WTC11 (cell line): ENCODE measurements at regions of chr22 and their contacts with region 1.

Region 1: GRCh38 chr22:30253205-30253852 is 6.8 kb upstream of the LIF start:
- DNase-seq: no peak
- ATAC-seq: no peak
- H3K4me3 Mint-ChIP-seq: no peak overlapping the region
- H3K27ac Mint-ChIP-seq: peak overlapping the region; percentile 65
- H3K4me1 Mint-ChIP-seq: peaks cover 35% of the 10 kb centered on the region
- H3K27me3 Mint-ChIP-seq: peaks cover 3% of the 10 kb centered on the region; the same call in 1 of the 2 replicates
- CTCF ChIP-seq: no peak

Region 2: DNA sequence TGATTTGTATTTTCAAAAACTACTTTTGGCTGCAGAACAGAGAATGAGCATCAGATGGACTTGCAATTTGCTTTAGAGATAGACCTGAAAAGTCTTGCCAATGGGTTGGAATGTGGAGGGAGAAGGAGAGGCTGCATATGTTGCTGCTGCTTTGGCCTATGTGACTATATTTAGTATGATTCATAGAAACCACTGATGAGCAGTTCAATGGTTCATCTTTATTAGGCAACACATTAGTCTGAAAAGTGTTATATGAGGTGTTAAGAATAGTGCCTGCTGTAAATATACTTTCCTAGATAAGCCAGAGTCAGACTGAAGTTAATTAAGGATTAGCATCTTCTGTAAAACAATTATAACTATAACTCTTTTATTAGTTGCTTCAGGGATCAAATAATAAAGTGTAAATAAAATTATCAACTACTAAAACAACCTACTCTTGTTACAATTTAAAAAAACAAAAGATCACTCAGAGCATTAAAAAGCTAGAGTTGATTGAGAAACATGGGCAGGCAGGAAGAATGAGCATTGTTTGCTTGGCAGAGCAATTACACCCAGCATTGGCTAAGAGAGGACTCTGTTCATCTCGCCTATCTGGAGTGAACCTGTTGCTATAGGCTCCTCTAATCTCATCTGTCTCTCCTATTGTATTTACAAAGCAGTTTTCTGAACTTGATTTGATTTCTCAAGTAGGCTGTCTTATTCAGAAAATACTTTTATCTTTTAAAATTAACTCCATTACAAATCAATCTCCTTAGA is 136.8 kb before region 1 on chr22:
- CTCF ChIA-PET with region 1: interaction called, 23 read pairs
- POLR2A ChIA-PET with region 1: no interaction called
- DNase-seq: no peak
- ATAC-seq: no peak
- H3K4me3 Mint-ChIP-seq: no peak overlapping the region
- H3K27ac Mint-ChIP-seq: no peak overlapping the region
- H3K4me1 Mint-ChIP-seq: no peaks in the 10 kb centered on the region
- H3K27me3 Mint-ChIP-seq: no peaks in the 10 kb centered on the region; the same call in 1 of the 2 replicates
- CTCF ChIP-seq: no peak

Region 3: GRCh38 chr22:30235687-30236170 is 17.6 kb before region 1 on chr22:
- CTCF ChIA-PET with region 1: interaction called, 22 read pairs
- POLR2A ChIA-PET with region 1: no interaction called
- DNase-seq: no peak
- ATAC-seq: peak; percentile 23
- H3K4me3 Mint-ChIP-seq: no peak overlapping the region
- H3K27ac Mint-ChIP-seq: no peak overlapping the region
- H3K4me1 Mint-ChIP-seq: peaks cover 53% of the 10 kb centered on the region
- H3K27me3 Mint-ChIP-seq: no peaks in the 10 kb centered on the region; the same call in 1 of the 2 replicates
- CTCF ChIP-seq: no peak

Region 4: DNA sequence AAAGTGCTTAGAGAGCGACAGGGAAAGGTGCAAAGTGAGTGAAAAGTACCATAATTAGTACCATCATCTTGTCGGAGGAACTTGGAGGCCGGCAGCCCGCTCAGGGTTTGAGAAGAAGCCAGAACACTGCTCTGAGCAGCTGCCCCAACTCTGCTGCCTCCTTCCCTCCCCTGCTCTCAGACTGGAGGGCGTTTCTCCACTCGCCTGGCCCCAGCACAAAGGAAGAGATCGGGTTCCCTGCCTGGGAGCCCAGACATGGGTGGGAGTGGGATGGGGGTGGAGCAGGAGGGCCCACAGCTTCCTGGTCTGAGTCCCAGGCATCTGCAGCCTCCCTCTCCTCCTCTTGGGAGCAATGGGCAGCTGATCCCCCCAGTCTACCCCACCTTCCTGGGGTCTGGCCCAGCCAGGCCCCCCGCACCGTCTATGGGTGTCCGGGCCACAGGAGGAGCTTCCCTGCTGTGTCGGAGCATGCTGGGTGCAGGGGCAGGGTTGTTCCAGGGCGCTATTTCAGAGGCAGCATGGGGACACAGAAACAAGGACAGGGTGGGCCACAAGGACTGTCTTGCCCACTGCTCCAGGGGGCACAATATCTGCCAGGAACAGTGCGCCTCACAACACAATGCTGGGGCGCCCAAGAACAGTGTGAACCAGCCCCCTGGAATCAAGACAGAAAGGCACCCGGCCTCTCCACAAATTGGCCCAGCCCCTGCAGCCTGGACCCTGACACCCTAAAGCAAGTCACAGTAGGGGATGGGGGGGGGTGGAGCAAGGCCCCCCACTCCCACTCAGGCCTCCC is 11.6 kb before region 1 on chr22:
- CTCF ChIA-PET with region 1: interaction called, 22 read pairs
- POLR2A ChIA-PET with region 1: no interaction called
- DNase-seq: no peak
- ATAC-seq: no peak
- H3K4me3 Mint-ChIP-seq: no peak overlapping the region
- H3K27ac Mint-ChIP-seq: no peak overlapping the region; the same call in 1 of the 2 replicates
- H3K4me1 Mint-ChIP-seq: peaks cover 40% of the 10 kb centered on the region
- H3K27me3 Mint-ChIP-seq: no peaks in the 10 kb centered on the region; the same call in 1 of the 2 replicates
- CTCF ChIP-seq: no peak

Region 5: DNA sequence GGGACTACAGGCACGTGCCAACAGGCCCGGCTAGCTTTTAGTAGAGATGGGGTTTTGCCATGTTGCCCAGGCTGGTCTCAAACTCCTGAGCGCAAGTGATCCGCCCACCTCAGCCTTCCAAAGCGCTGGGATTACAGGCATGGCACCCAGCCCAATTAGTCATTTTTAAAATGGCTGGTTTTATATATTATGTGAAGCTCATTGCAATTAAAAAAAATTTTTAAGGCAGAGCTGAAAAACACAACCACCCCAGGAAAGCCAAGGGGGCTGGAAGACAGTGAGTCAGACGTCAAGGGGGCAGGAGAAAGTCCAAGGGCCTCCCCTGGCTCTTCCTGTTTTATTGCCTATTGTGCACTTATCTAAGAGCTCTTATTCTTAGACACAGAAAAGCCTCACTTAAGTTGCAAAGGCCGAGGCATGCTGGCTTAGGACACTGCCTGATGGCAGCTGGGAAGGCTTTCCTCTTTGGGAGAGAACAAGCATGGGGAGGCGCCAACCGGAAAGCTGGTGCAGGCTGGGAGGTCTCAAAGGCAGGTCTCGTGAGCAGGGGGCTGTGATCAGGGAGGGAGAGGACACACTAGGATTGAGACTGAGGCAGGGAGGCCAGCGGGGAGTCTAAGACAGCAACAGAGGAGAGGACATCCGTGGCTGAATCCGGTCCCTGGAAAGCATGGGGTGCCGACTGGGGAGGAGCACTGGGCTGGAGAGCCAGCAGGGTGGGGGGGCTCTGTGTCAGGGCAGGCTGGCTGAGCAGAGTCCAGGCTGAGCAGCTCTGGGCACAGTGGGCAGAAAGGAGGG is 24.4 kb after region 1 on chr22:
- CTCF ChIA-PET with region 1: interaction called, 18 read pairs
- POLR2A ChIA-PET with region 1: no interaction called
- DNase-seq: no peak
- ATAC-seq: no peak
- H3K4me3 Mint-ChIP-seq: no peak overlapping the region
- H3K27ac Mint-ChIP-seq: no peak overlapping the region
- H3K4me1 Mint-ChIP-seq: peaks cover 8% of the 10 kb centered on the region
- H3K27me3 Mint-ChIP-seq: no peaks in the 10 kb centered on the region; the same call in 1 of the 2 replicates
- CTCF ChIP-seq: no peak

Region 6: GRCh38 chr22:30326706-30327362 is 73.5 kb after region 1 on chr22 and contains the start of gene TBC1D10A:
- CTCF ChIA-PET with region 1: interaction called, 13 read pairs
- POLR2A ChIA-PET with region 1: no interaction called
- DNase-seq: peak; percentile 95
- ATAC-seq: peak; percentile 93
- H3K4me3 Mint-ChIP-seq: peak within 1 kb of the TSS; percentile 75
- H3K27ac Mint-ChIP-seq: peak within 1 kb of the TSS; percentile 89
- H3K4me1 Mint-ChIP-seq: peaks cover 28% of the 10 kb centered on the region
- H3K27me3 Mint-ChIP-seq: no peaks in the 10 kb centered on the region
- CTCF ChIP-seq: no peak
- total RNA-seq, gene TBC1D10A: 7.5 to 11.1 TPM (median 9.6 TPM) in 3 replicates

Region 7: GRCh38 chr22:30444632-30445437 is 191.5 kb after region 1 on chr22:
- CTCF ChIA-PET with region 1: no interaction called
- POLR2A ChIA-PET with region 1: no interaction called
- DNase-seq: peak; percentile 85
- ATAC-seq: peak; percentile 90
- H3K4me3 Mint-ChIP-seq: peak overlapping the region; percentile 56
- H3K27ac Mint-ChIP-seq: no peak overlapping the region
- H3K4me1 Mint-ChIP-seq: peaks cover 7% of the 10 kb centered on the region
- H3K27me3 Mint-ChIP-seq: no peaks in the 10 kb centered on the region; the same call in 1 of the 2 replicates
- CTCF ChIP-seq: peak; percentile 91